Activated CD4-positive, alpha-beta memory T cell treated with anti-CD3 and anti-CD28 coated beads, Interleukin-2, amount 10 ng/mL, durations not matched to agents 7 days and 5 days (primary cell): ENCODE measurements at regions of chr3 and their contacts with region 1.

Region 1: DNA sequence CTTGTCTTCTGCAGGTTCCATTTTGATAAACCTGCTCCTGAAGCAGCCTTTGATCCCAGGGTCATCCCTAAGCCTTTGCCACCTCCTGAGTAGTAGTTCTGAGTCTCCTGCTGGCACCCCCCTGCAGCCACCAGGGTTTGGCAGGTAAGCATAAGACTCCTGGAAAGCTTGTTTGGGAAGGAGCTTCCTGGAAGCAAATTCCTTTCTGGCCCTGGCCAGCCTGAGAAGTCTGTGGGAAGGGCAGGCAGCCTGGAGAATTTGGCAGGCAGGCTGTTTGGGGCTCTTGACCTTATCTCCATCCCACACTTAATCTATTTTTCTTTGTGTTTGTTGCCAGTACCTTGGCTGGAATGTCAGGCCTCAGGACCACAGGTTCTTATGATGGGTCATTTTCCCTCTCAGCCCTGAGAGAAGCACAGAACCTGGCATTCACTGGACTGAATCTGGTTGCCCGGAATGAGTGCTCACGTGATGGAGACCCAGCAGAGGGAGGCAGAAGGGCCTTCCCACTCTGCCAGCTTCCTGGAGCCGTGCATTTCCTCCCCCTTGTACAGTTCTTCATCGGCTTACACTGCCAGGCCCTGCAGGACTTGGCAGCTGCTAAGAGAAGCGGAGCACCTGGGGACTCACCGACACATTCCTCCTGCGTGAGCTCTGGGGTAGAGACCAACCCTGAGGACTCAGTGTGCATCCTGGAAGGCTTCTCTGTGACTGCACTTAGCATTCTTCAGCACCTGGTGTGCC is 13.4 kb downstream of the ATRIP start:
- DNase-seq: no peak
- H3K4me3 Mint-ChIP-seq: no peak overlapping the region
- H3K27ac Mint-ChIP-seq: no peak overlapping the region
- H3K4me1 Mint-ChIP-seq: peaks cover 6% of the 10 kb centered on the region
- H3K27me3 Mint-ChIP-seq: no peaks in the 10 kb centered on the region

Region 2: DNA sequence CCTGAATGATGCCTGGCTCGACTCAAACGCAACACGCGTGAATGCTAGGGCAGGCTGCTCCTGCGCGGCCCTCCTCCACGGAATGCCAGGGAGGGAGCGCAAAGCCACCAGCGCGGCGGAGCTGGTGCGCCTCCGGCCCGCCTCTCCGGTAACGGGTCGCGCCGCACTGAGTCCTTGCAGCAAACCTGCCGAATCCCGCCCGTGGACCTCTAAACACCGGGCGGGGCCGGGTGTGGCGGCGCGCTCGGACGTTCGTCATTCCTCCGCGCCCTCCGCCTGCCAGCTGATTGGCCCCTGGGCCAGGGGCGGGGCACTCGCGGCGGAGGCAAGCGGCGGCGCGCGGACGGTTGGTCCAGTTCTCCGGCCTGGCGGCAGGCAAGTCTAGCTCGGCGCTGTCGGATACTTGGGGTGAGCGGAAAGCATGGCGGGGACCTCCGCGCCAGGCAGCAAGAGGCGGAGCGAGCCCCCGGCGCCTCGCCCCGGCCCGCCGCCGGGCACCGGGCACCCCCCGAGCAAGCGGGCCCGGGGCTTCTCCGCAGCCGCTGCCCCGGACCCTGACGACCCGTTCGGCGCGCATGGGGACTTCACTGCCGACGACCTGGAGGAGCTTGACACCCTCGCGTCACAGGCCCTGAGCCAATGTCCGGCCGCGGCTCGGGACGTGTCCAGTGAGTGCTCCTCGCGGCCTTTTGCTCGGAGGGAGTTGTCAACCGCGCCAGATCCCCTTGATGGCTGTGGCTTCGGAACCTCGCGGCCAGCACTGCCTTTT is 13.3 kb before region 1 on chr3 and contains the start of gene ATRIP:
- CTCF ChIA-PET with region 1: interaction called, 4 read pairs
- POLR2A ChIA-PET with region 1: interaction called, 58 read pairs
- DNase-seq: peak; percentile 90
- H3K4me3 Mint-ChIP-seq: peak within 1 kb of the TSS; percentile 90
- H3K27ac Mint-ChIP-seq: peak within 1 kb of the TSS; percentile 88
- H3K4me1 Mint-ChIP-seq: peaks cover 53% of the 10 kb centered on the region
- H3K27me3 Mint-ChIP-seq: no peaks in the 10 kb centered on the region
- total RNA-seq, gene ATRIP: 13.4 to 15.2 TPM

Region 3: GRCh38 chr3:48556793-48557626 is 97.1 kb after region 1 on chr3 and contains the start of gene PFKFB4:
- CTCF ChIA-PET with region 1: interaction called, 11 read pairs
- POLR2A ChIA-PET with region 1: interaction called, 3 read pairs
- DNase-seq: peak; percentile 100
- H3K4me3 Mint-ChIP-seq: peak within 1 kb of the TSS; percentile 79
- H3K27ac Mint-ChIP-seq: peak within 1 kb of the TSS; percentile 74
- H3K4me1 Mint-ChIP-seq: peaks cover 49% of the 10 kb centered on the region
- H3K27me3 Mint-ChIP-seq: no peaks in the 10 kb centered on the region
- total RNA-seq, gene PFKFB4: 33.3 to 34.4 TPM